IMR-90 (cell line): ENCODE measurements at regions of chr12 and their contacts with region 1.

Region 1: GRCh38 chr12:96399919-96400797 is at the start of gene CDK17:
- DNase-seq: peak; percentile 83
- ATAC-seq: peak; percentile 82
- H3K4me3 ChIP-seq: peak within 1 kb of the TSS; percentile 82
- H3K27ac ChIP-seq: peak within 1 kb of the TSS; percentile 95
- H3K4me1 ChIP-seq: peaks cover 2% of the 10 kb centered on the region; the same call in 1 of the 2 replicates
- H3K27me3 ChIP-seq: no peaks in the 10 kb centered on the region
- CTCF ChIP-seq: peak; percentile 59
- POLR2A ChIP-seq: peak; percentile 84
- RAD21 ChIP-seq: peak; percentile 38
- total RNA-seq, gene CDK17: 50.2 and 58.9 TPM in 2 replicates

Region 2: GRCh38 chr12:96061864-96062453 is 338.2 kb before region 1 on chr12:
- CTCF ChIA-PET with region 1: interaction called, 4 read pairs
- POLR2A ChIA-PET with region 1: no interaction called
- dilution Hi-C with region 1: no loop called
- in situ Hi-C with region 1: loop called (anchors 5 kb)
- intact Hi-C with region 1: loop called (anchors 1 kb)
- DNase-seq: peak; percentile 87
- ATAC-seq: peak; percentile 95
- H3K4me3 ChIP-seq: no peak overlapping the region
- H3K27ac ChIP-seq: no peak overlapping the region
- H3K4me1 ChIP-seq: no peaks in the 10 kb centered on the region
- H3K27me3 ChIP-seq: no peaks in the 10 kb centered on the region
- CTCF ChIP-seq: peak; percentile 93
- POLR2A ChIP-seq: no peak
- RAD21 ChIP-seq: peak; percentile 97

Region 3: GRCh38 chr12:96274331-96274730 is 125.8 kb before region 1 on chr12:
- CTCF ChIA-PET with region 1: interaction called, 4 read pairs
- POLR2A ChIA-PET with region 1: no interaction called
- dilution Hi-C with region 1: no loop called
- in situ Hi-C with region 1: no loop called
- intact Hi-C with region 1: loop called (anchors 10 kb)
- DNase-seq: peak; percentile 77
- ATAC-seq: peak; percentile 70
- H3K4me3 ChIP-seq: no peak overlapping the region
- H3K27ac ChIP-seq: no peak overlapping the region
- H3K4me1 ChIP-seq: peaks cover 5% of the 10 kb centered on the region
- H3K27me3 ChIP-seq: no peaks in the 10 kb centered on the region
- CTCF ChIP-seq: no peak
- POLR2A ChIP-seq: no peak
- RAD21 ChIP-seq: no peak

Region 4: DNA sequence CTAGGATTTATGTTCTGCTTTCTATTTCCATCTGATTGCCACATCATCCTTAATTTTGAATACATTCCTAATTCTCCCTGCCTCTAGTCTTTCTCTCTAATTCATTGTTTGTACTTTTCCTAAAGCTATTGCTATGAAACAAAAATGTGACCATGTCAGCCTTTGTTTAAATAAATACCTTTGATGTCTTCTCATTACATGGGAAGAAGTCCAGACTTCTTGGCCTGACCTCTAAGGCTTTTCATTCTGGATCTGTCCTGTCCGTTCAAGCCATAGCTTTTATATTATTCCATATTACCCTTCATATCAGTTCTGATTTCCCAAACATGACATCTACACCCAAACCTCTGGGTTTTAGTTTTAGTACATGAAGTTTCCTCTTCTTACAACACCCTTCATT is 91.3 kb before region 1 on chr12:
- CTCF ChIA-PET with region 1: interaction called, 5 read pairs
- POLR2A ChIA-PET with region 1: no interaction called
- dilution Hi-C with region 1: no loop called
- in situ Hi-C with region 1: no loop called
- intact Hi-C with region 1: loop called (anchors 5 kb)
- DNase-seq: peak; percentile 45
- ATAC-seq: peak; percentile 59
- H3K4me3 ChIP-seq: no peak overlapping the region
- H3K27ac ChIP-seq: no peak overlapping the region
- H3K4me1 ChIP-seq: no peaks in the 10 kb centered on the region; the same call in 1 of the 2 replicates
- H3K27me3 ChIP-seq: no peaks in the 10 kb centered on the region
- CTCF ChIP-seq: no peak
- POLR2A ChIP-seq: no peak
- RAD21 ChIP-seq: no peak

Region 5: GRCh38 chr12:96445691-96446583 is 45.8 kb after region 1 on chr12:
- CTCF ChIA-PET with region 1: interaction called, 5 read pairs
- POLR2A ChIA-PET with region 1: no interaction called
- dilution Hi-C with region 1: no loop called
- in situ Hi-C with region 1: no loop called
- intact Hi-C with region 1: loop called (anchors 1 kb)
- DNase-seq: peak; percentile 99
- ATAC-seq: peak; percentile 93
- H3K4me3 ChIP-seq: no peak overlapping the region
- H3K27ac ChIP-seq: peak overlapping the region; percentile 68
- H3K4me1 ChIP-seq: peaks cover 7% of the 10 kb centered on the region
- H3K27me3 ChIP-seq: no peaks in the 10 kb centered on the region
- CTCF ChIP-seq: no peak
- POLR2A ChIP-seq: no peak; the same call in 1 of the 2 replicates
- RAD21 ChIP-seq: peak; percentile 26

Region 6: DNA sequence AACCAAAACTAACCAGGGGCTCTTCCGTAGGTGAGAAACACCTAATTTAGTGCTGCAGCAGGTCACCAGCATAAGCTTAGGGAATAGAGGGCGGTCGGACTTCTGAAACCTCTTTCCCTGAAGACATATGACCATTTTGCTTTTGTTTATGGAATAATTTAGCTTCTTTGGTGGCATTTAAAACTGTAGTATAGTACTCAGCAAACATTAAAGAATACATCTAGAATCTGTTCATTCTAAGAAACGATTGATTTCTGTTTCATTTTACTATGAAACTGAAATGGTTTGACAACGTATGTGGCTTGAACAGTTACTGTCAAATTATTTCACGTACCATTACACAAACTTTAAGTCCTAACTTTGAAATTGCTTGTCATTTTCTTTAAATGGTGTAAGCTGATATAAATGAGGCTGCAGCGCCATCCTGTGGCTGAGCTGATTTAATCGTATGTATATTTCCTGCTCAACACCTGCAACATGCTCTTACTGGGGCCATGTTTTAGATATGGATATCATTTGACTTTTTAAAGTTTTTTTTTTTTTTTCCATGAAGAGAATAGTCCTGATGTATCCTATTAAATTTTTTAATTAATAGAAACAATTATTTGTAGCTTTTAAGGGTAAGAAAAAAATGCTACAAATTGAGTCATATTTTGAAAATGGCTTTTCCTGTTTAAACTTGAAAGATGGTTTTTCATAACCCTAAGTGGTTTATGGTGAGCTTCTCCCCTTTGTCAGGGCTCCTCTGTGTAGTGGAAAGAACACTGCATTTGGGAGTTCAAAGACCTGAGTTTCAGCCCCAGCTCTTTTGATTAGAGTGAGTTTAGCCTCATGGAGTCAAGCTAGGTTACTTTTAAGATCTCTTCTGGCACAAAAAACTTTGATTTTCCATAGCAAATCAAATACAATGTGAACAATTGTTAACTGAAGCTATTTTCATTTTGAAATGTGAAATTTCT is 116.6 kb after region 1 on chr12:
- CTCF ChIA-PET with region 1: interaction called, 5 read pairs
- POLR2A ChIA-PET with region 1: no interaction called
- dilution Hi-C with region 1: no loop called
- in situ Hi-C with region 1: no loop called
- intact Hi-C with region 1: loop called (anchors 1 kb)
- DNase-seq: peak; percentile 85
- ATAC-seq: peak; percentile 79
- H3K4me3 ChIP-seq: no peak overlapping the region
- H3K27ac ChIP-seq: no peak overlapping the region
- H3K4me1 ChIP-seq: peaks cover 4% of the 10 kb centered on the region
- H3K27me3 ChIP-seq: no peaks in the 10 kb centered on the region
- CTCF ChIP-seq: peak; percentile 76
- POLR2A ChIP-seq: no peak
- RAD21 ChIP-seq: peak; percentile 86